Activated B cell treated with CpG ODN at 0.5 μM for 24 hours (primary cell): ENCODE measurements at regions of chr15 and their contacts with region 1.

Region 1: DNA sequence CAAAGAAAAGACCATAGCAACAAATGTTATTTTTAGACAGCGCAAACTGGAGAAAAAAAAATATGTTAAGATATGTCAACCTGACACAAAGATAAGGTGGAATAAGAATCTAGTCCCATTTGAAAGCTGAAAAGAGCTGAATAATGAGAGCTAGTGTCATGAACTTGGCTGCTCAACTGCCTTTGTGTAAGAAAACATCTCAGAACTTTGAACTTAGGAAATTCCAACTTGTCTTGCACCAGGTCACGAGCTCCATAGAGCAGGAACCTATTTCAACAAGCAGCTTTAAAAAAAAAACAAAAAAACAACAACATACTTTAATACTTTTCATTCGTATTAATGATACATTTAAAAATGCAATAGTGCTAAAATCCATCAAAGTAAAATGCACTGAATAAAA is 79.5 kb downstream of the ZNF280D start:
- DNase-seq: no peak
- ATAC-seq: no peak
- H3K4me3 Mint-ChIP-seq: no peak overlapping the region
- H3K27ac Mint-ChIP-seq: no peak overlapping the region
- H3K4me1 Mint-ChIP-seq: no peaks in the 10 kb centered on the region
- H3K27me3 Mint-ChIP-seq: no peaks in the 10 kb centered on the region
- CTCF ChIP-seq: no peak

Region 2: GRCh38 chr15:56491110-56491722 is 162.6 kb before region 1 on chr15:
- CTCF ChIA-PET with region 1: no interaction called
- POLR2A ChIA-PET with region 1: no interaction called
- intact Hi-C with region 1: loop called (anchors 10 kb)
- DNase-seq: no peak
- ATAC-seq: peak; percentile 90
- H3K4me3 Mint-ChIP-seq: no peak overlapping the region
- H3K27ac Mint-ChIP-seq: no peak overlapping the region
- H3K4me1 Mint-ChIP-seq: no peaks in the 10 kb centered on the region
- H3K27me3 Mint-ChIP-seq: no peaks in the 10 kb centered on the region
- CTCF ChIP-seq: no peak

Region 3: GRCh38 chr15:56639628-56640027 is 14.2 kb before region 1 on chr15:
- CTCF ChIA-PET with region 1: no interaction called
- POLR2A ChIA-PET with region 1: no interaction called
- intact Hi-C with region 1: loop called (anchors 1 kb)
- DNase-seq: no peak
- ATAC-seq: no peak
- H3K4me3 Mint-ChIP-seq: no peak overlapping the region
- H3K27ac Mint-ChIP-seq: no peak overlapping the region
- H3K4me1 Mint-ChIP-seq: no peaks in the 10 kb centered on the region
- H3K27me3 Mint-ChIP-seq: no peaks in the 10 kb centered on the region
- CTCF ChIP-seq: no peak